OCI-LY7 (cell line): ENCODE measurements at regions of chr20 and their contacts with region 1.

Region 1: GRCh38 chr20:58236612-58237330 is 8.3 kb upstream of the ANKRD60 start:
- DNase-seq: peak; percentile 69
- H3K4me3 ChIP-seq: peak overlapping the region; percentile 52
- H3K27ac ChIP-seq: no peak overlapping the region
- H3K4me1 ChIP-seq: no peaks in the 10 kb centered on the region
- CTCF ChIP-seq: peak; percentile 98

Region 2: DNA sequence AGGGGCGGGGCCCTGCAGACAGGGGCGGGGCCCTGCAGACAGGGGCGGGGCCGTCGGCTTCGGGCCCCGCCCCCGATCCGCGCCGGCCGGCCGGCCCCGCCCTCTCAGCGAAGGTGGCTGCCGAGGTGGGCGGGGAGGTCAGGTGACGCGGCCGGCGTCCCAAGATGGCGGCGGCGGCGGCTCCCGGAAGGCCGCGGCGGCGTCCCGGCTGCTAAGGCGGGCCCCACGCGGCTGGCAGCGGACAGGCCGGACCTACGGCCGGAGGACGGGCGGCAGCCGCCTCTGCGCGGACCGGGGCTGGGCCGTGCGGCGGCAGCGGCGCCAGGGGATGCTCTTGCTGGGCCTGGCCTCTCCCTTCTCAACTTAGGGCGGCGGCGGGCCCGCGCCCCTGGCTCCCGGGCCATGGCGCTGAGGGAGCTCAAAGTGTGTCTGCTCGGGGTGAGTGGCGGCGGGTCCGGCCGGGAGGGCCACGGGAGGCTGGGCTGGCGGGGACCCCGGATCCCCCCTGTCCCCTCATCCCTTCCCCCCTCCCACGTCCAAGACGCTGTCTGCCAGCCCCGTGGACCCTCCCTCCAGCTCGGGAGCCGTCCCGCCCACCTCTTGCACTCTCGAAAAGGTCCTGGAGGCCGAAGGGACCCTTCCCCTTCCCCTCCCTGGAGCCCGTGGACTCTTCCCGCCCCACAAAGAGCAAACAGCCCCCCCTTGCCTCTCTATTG is 73.0 kb after region 1 on chr20 and contains the start of gene RAB22A:
- CTCF ChIA-PET with region 1: no interaction called
- POLR2A ChIA-PET with region 1: no interaction called
- intact Hi-C with region 1: no loop called
- DNase-seq: peak; percentile 88
- H3K4me3 ChIP-seq: peak within 1 kb of the TSS; percentile 94
- H3K27ac ChIP-seq: peak within 1 kb of the TSS; percentile 59
- H3K4me1 ChIP-seq: peaks cover 25% of the 10 kb centered on the region
- CTCF ChIP-seq: no peak
- total RNA-seq, gene RAB22A: 6.8 and 7.0 TPM in 2 replicates

Region 3: GRCh38 chr20:58388882-58389323 is 152.1 kb after region 1 on chr20 and contains the start of gene VAPB:
- CTCF ChIA-PET with region 1: no interaction called
- POLR2A ChIA-PET with region 1: interaction called, 3 read pairs
- intact Hi-C with region 1: loop called (anchors 10 kb)
- DNase-seq: peak; percentile 97
- H3K4me3 ChIP-seq: peak within 1 kb of the TSS; percentile 73
- H3K27ac ChIP-seq: peak within 1 kb of the TSS; percentile 68
- H3K4me1 ChIP-seq: peaks cover 31% of the 10 kb centered on the region
- CTCF ChIP-seq: no peak
- total RNA-seq, gene VAPB: 12.1 and 13.3 TPM in 2 replicates

Region 4: GRCh38 chr20:58447511-58448391 is 211.0 kb after region 1 on chr20:
- CTCF ChIA-PET with region 1: no interaction called
- POLR2A ChIA-PET with region 1: no interaction called
- intact Hi-C with region 1: loop called (anchors 1 kb)
- DNase-seq: peak; percentile 61
- H3K4me3 ChIP-seq: no peak overlapping the region
- H3K27ac ChIP-seq: no peak overlapping the region
- H3K4me1 ChIP-seq: no peaks in the 10 kb centered on the region
- CTCF ChIP-seq: peak; percentile 79

Region 5: DNA sequence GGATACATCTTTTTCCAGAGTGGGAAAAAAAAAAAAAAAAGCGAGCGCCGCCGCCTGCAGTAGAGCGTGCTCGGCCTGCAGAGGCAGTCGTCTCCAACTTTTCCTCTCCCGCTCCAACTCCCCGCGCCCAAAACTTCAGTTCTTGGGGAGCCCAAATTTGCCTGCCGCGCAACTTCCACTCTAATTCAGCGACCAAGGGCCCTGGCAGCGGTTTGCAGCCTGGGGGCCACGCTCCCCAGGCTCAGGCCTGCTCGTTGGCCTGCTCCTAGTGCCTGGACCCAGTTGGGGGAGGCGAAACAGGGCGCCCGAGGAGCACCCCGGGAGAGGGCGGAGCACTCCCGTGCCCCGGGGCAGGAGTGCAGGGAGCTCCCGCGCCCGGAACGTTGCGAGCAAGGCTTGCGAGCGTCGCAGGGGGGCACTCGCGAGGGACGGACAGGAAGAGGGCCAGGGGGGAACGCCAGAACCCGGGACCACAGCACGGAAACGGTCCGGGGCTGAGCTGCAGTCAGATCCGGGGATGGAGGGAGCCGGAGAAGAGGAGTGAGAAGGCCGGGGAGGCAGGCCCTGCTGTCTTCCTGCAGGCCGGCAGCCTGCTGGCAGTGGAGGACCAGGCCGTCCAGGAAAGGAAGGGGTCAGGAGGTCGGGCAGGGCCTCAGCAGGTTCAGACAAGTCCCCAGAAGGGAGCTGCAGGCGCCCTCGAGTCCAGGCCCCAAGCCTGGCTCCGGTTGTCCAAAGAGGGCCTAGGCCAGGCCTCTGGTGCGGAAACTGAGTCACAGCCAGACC is 414.2 kb after region 1 on chr20 and contains the start of gene STX16:
- CTCF ChIA-PET with region 1: no interaction called
- POLR2A ChIA-PET with region 1: no interaction called
- intact Hi-C with region 1: loop called (anchors 2 kb)
- DNase-seq: peak; percentile 94
- H3K4me3 ChIP-seq: peak within 1 kb of the TSS; percentile 98
- H3K27ac ChIP-seq: peak within 1 kb of the TSS; percentile 74
- H3K4me1 ChIP-seq: peaks cover 42% of the 10 kb centered on the region
- CTCF ChIP-seq: peak; percentile 88
- total RNA-seq, gene STX16: 48.2 and 50.5 TPM in 2 replicates

Region 6: DNA sequence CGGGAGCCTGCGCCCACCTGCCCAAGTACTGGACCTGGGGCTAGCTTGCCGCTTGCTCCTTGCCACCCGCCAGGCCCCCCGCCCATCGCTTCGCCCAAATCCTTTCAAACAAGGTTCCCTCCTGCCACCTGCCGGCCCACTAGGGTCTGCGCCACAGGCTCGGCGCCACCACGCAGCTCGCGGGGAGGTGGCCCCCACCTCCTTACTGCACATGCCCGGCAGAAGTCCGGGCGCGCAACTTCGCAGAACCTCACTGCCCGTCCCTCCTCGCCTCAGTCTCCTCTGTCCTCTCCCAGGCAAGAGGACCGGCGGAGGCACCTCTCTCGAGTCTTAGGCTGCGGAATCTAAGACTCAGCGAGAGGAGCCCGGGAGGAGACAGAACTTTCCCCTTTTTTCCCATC is 602.7 kb after region 1 on chr20:
- CTCF ChIA-PET with region 1: no interaction called
- POLR2A ChIA-PET with region 1: no interaction called
- intact Hi-C with region 1: loop called (anchors 5 kb)
- DNase-seq: peak; percentile 37
- H3K4me3 ChIP-seq: no peak overlapping the region
- H3K27ac ChIP-seq: no peak overlapping the region
- H3K4me1 ChIP-seq: no peaks in the 10 kb centered on the region
- CTCF ChIP-seq: peak; percentile 65

Region 7: DNA sequence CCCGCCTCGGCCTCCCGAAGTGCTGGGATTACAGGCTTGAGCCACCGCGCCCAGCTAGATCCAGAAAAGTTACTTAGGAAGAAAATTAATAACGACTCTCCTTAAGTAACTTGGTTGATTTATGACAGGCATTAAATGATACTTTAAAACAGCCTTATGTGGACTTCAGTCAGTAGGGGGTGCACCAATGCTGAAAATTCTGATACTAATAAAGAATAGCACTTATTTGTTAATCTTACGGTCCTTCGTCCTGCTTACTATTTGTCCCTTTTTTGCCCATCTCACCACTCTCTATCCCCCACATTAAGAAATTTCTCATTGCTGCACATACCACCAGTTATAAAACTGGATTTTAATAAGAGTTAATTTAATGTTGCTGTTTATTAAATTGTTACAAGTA is 818.5 kb after region 1 on chr20:
- CTCF ChIA-PET with region 1: no interaction called
- POLR2A ChIA-PET with region 1: no interaction called
- intact Hi-C with region 1: no loop called
- DNase-seq: peak; percentile 33
- H3K4me3 ChIP-seq: no peak overlapping the region
- H3K27ac ChIP-seq: no peak overlapping the region
- H3K4me1 ChIP-seq: no peaks in the 10 kb centered on the region
- CTCF ChIP-seq: peak; percentile 72